Cardiac septum (tissue), 1 donor: ENCODE measurements at regions of chr10 and their contacts with region 1.

Region 1: GRCh38 chr10:84264611-84265141 is 19.8 kb downstream of the RGR start:
- DNase-seq: no peak

Region 2: GRCh38 chr10:84375011-84375410 is 110.3 kb after region 1 on chr10:
- intact Hi-C with region 1: loop called (anchors 5 kb)
- DNase-seq: no peak